ENCODE measurements at regions of chr17 and their contacts with region 1.

Region 1: DNA sequence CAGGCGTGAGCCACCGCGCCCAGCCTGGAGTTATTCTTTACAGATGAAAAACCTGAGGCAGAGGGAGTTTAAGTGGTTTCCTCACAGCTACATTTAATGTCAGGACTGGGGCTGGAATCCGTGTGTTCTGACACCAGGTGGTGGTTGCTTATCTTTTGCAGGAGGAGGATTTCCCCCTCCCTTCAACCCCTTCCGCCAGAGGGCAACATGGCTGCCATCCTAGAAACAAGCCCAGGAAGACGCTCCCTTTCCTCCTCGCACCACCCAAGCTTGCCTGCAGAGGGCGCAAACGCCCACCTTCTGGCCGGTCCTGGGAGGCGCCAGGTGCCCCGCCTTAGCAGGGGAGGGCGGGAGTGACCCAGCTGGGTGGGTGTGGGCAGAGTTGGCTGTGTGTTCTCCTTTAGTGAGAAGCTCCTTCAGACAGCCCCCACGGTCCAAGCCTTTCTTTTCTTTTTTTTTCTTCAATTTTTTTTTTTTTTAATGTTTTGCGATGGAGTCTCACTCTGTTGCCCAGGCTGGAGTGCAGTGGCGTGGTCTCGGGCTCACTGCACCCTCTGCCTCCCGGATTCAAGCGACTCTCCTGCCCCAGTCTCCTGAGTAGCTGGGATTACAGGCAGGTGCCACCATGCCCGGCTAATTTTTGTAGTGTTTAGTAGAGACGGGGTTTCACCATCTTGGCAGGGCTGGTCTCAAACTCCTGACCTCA is 9.9 kb upstream of the RAP1GAP2 start:
- DNase-seq: peak; percentile 81 to 95 (median 88)
- ATAC-seq: peak; percentile 98
- H3K4me3 ChIP-seq: no peak overlapping the region
- H3K4me3 Mint-ChIP-seq: no peak overlapping the region
- H3K27ac ChIP-seq: no peak overlapping the region
- H3K27ac Mint-ChIP-seq: no peak overlapping the region
- H3K4me1 ChIP-seq: peaks cover 26% of the 10 kb centered on the region
- H3K4me1 Mint-ChIP-seq: peaks cover 23% of the 10 kb centered on the region
- H3K27me3 ChIP-seq: no peaks in the 10 kb centered on the region
- H3K27me3 Mint-ChIP-seq: no peaks in the 10 kb centered on the region
- CTCF ChIP-seq: peak; percentile 88

Region 2: GRCh38 chr17:2796164-2797125 is 10.1 kb after region 1 on chr17 and contains the start of gene RAP1GAP2:
- CTCF ChIA-PET with region 1: interaction called, 35 read pairs
- POLR2A ChIA-PET with region 1: interaction called, 14 read pairs
- intact Hi-C with region 1: no loop called
- DNase-seq: peak; percentile 45 to 94 (median 66)
- ATAC-seq: peak; percentile 91
- H3K4me3 ChIP-seq: peak within 1 kb of the TSS; percentile 68
- H3K4me3 Mint-ChIP-seq: peak within 1 kb of the TSS; percentile 92
- H3K27ac ChIP-seq: no peak within 1 kb of the TSS
- H3K27ac Mint-ChIP-seq: peak within 1 kb of the TSS; percentile 80
- H3K4me1 ChIP-seq: peaks cover 79% of the 10 kb centered on the region
- H3K4me1 Mint-ChIP-seq: peaks cover 79% of the 10 kb centered on the region
- H3K27me3 ChIP-seq: no peaks in the 10 kb centered on the region
- H3K27me3 Mint-ChIP-seq: no peaks in the 10 kb centered on the region
- CTCF ChIP-seq: no peak
- total RNA-seq, gene RAP1GAP2: 46.3 to 49.7 TPM

Region 3: DNA sequence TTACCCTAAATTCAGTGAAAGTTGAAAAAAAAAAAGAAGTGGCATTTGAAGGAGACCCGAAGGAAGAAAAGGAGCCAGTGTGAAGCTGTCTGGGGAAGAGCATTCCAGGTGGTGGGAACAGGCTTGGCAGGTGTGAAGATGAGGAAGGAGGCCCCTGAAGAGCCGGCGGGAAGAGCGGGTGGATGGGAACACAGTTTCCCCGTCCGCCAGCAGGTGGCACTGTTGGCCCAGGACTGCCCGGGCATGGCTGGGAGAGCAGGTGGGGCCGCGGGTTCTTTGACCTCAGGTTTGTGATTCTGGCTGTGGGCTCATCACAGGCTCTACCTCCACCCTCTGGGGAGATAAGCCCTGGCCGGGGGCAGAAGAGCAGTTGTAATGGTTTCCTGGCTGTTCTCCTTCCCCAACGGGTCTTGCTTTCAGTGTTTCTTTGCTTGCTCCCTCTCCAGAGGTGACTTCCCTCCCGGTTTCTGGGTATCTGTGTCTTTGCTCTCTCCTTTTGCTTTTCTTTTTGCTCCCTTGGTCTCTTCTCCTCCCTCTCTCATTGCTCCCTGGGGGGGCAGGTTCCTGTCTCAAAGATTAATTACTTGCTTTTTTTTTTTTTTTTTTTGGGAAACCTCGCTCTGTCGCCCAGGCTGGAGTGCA is 42.2 kb after region 1 on chr17:
- CTCF ChIA-PET with region 1: interaction called, 17 read pairs
- POLR2A ChIA-PET with region 1: no interaction called
- intact Hi-C with region 1: loop called in 1 of 2 experiments (anchors 2 kb)
- DNase-seq: peak; percentile 55 to 86 (median 74)
- ATAC-seq: peak; percentile 92
- H3K4me3 ChIP-seq: no peak overlapping the region
- H3K4me3 Mint-ChIP-seq: no peak overlapping the region
- H3K27ac ChIP-seq: no peak overlapping the region
- H3K27ac Mint-ChIP-seq: no peak overlapping the region
- H3K4me1 ChIP-seq: peaks cover 34% of the 10 kb centered on the region
- H3K4me1 Mint-ChIP-seq: peaks cover 27% of the 10 kb centered on the region
- H3K27me3 ChIP-seq: no peaks in the 10 kb centered on the region
- H3K27me3 Mint-ChIP-seq: no peaks in the 10 kb centered on the region
- CTCF ChIP-seq: peak; percentile 97

Region 4: DNA sequence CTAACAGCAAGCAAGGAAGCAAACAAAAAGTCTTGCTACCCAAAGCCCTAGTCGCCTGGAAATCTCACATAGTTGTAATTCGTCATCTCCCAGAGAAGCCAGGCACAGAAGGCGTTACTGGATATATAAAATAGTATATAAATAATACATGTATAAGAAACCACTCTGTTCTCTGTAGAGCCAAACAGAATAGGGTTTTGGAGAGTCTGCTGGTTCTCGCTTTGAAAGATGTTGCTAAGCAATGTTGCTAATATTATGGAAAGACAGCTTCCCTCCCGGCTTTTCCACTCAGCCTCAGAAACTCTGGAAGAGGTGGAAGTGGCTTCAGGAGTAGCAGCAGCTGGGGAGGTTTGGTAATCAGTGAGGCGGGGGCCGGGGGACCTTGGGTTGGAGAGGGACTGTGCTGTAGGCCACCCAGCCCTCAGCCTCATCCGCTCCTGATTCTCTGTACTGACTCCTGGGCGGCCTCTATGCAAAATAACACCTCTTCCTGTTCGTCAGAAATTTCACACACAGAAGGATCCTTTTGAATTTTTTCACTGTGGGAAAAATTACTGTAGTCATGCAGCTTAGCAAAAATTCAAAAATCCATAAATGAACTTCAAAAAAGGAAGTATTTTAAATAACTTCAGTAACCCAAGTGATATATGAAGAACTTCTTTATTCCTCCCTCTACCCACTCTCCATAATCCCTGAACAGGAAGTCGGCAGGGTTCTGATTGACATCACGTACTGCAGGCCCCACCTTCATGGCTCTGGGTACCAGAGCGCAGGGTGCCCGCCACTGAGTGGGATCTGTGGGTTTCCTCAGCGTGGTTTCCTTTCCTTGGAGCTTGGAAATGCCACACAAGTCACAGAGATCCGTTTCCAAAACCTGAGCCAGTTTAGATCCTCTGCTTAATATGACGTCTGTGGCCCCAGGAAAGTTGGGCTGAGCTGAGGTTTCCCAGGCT is 61.3 kb after region 1 on chr17:
- CTCF ChIA-PET with region 1: interaction called, 16 read pairs
- POLR2A ChIA-PET with region 1: interaction called, 3 read pairs
- intact Hi-C with region 1: no loop called
- DNase-seq: peak in 1 of 14 experiments; percentile 31
- ATAC-seq: no peak
- H3K4me3 ChIP-seq: no peak overlapping the region
- H3K4me3 Mint-ChIP-seq: peak overlapping the region; percentile 30
- H3K27ac ChIP-seq: no peak overlapping the region
- H3K27ac Mint-ChIP-seq: no peak overlapping the region
- H3K4me1 ChIP-seq: peaks cover 20% of the 10 kb centered on the region
- H3K4me1 Mint-ChIP-seq: peaks cover 25% of the 10 kb centered on the region
- H3K27me3 ChIP-seq: peaks cover 0 to 4% of the 10 kb centered on the region in 2 experiments
- H3K27me3 Mint-ChIP-seq: peaks cover 10% of the 10 kb centered on the region
- CTCF ChIP-seq: no peak

Region 5: GRCh38 chr17:3012926-3013581 is 226.7 kb after region 1 on chr17:
- CTCF ChIA-PET with region 1: interaction called, 16 read pairs
- POLR2A ChIA-PET with region 1: interaction called, 5 read pairs
- intact Hi-C with region 1: loop called (anchors 1 kb)
- DNase-seq: peak; percentile 32 to 69 (median 50)
- ATAC-seq: peak; percentile 87
- H3K4me3 ChIP-seq: no peak overlapping the region
- H3K4me3 Mint-ChIP-seq: no peak overlapping the region
- H3K27ac ChIP-seq: no peak overlapping the region
- H3K27ac Mint-ChIP-seq: no peak overlapping the region
- H3K4me1 ChIP-seq: no peaks in the 10 kb centered on the region
- H3K4me1 Mint-ChIP-seq: no peaks in the 10 kb centered on the region
- H3K27me3 ChIP-seq: no peaks in the 10 kb centered on the region
- H3K27me3 Mint-ChIP-seq: no peaks in the 10 kb centered on the region
- CTCF ChIP-seq: peak; percentile 69

Region 6: GRCh38 chr17:3385869-3386816 is 599.8 kb after region 1 on chr17 and contains the start of gene OR3A2:
- CTCF ChIA-PET with region 1: no interaction called
- POLR2A ChIA-PET with region 1: no interaction called
- intact Hi-C with region 1: no loop called
- DNase-seq: peak in 8 of 14 experiments; percentile 6 to 73 (median 23)
- ATAC-seq: peak; percentile 89
- H3K4me3 ChIP-seq: peak within 1 kb of the TSS; percentile 48
- H3K4me3 Mint-ChIP-seq: peak within 1 kb of the TSS; percentile 83
- H3K27ac ChIP-seq: no peak within 1 kb of the TSS
- H3K27ac Mint-ChIP-seq: peak within 1 kb of the TSS; percentile 74
- H3K4me1 ChIP-seq: no peaks in the 10 kb centered on the region
- H3K4me1 Mint-ChIP-seq: peaks cover 6% of the 10 kb centered on the region
- H3K27me3 ChIP-seq: peaks cover 0 to 3% of the 10 kb centered on the region in 2 experiments
- H3K27me3 Mint-ChIP-seq: peaks cover 66% of the 10 kb centered on the region
- CTCF ChIP-seq: no peak
- total RNA-seq, gene OR3A2: 0.55 to 1.3 TPM

Measured in CD4-positive, alpha-beta T cell (primary cell).